Activated CD8-positive, alpha-beta T cell treated with anti-CD3 and anti-CD28 coated beads for 36 hours (primary cell): ENCODE measurements at regions of chr6 and their contacts with region 1.

Region 1: DNA sequence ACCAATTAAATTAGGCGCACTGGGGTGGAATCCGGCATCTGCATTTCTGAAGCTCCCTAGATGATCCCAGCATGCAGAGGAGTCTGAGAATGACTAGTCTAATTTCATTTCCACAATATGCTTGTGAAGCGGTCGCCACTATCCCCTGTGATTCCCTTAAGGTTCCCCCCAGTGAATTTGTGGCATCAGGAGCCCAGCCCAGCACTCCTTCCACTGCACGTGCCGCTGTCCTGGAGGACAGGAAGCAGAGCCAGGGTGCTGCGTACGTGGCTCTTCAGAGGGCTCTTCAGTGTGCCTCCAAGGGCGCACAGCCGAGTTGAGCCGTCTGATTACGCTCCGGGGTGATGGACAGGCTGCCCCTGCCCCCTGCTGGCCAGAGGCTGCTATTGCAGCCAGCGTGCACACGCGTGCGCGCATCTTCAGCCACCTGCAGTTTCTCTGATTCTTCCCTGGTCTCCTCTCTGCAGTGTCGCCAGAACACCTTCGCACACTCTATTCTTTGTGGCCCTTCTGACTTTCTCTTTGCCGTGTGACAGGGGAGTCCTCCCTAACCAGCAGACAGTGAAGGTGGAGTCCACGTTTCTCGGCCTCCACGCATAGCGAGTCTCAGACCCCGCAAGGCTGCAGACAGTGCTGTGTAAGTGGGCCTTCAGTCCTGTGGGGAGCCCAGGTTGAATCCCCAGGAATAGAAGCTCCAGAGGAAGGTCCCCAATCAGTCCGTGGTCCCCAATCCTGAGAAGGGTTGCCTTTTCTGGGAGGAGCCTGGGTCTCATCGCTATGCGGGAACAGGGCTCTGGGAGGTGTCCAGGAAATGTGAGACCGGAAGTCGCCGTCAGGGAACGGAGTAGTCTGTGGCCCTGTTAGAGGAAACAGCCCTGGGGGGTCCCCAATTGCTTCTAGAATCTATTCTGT is 16.5 kb upstream of the NCR2 start:
- DNase-seq: peak; percentile 90
- ATAC-seq: peak; percentile 99
- H3K4me3 Mint-ChIP-seq: peak overlapping the region; percentile 52
- H3K27ac Mint-ChIP-seq: peak overlapping the region; percentile 80
- H3K4me1 Mint-ChIP-seq: peaks cover 10% of the 10 kb centered on the region
- H3K27me3 Mint-ChIP-seq: peaks cover 14% of the 10 kb centered on the region
- CTCF ChIP-seq: peak; percentile 99

Region 2: DNA sequence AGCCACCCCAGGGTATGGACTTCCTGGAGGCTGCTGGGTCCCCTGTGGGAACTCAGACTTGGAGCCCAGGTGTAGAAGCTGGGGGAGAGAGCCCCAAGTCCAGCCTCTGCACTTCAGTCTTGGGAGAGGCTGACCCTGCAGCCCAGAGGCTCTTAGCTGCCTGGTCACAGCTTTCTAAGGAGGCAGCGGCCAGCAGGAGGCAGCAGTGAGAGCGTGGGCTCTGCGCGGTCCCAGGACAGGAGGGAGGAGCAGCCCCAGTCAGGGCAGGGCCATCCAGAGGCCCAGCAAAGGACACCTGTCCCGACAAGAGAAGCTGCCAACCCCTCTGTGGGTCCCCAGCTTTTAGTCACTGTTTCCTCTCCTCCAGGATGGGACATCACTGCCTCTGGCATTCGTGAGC is 127.3 kb before region 1 on chr6:
- CTCF ChIA-PET with region 1: interaction called, 11 read pairs
- POLR2A ChIA-PET with region 1: no interaction called
- intact Hi-C with region 1: no loop called
- DNase-seq: peak; percentile 62
- ATAC-seq: peak; percentile 76
- H3K4me3 Mint-ChIP-seq: no peak overlapping the region
- H3K27ac Mint-ChIP-seq: no peak overlapping the region
- H3K4me1 Mint-ChIP-seq: peaks cover 18% of the 10 kb centered on the region
- H3K27me3 Mint-ChIP-seq: no peaks in the 10 kb centered on the region
- CTCF ChIP-seq: peak; percentile 66

Region 3: DNA sequence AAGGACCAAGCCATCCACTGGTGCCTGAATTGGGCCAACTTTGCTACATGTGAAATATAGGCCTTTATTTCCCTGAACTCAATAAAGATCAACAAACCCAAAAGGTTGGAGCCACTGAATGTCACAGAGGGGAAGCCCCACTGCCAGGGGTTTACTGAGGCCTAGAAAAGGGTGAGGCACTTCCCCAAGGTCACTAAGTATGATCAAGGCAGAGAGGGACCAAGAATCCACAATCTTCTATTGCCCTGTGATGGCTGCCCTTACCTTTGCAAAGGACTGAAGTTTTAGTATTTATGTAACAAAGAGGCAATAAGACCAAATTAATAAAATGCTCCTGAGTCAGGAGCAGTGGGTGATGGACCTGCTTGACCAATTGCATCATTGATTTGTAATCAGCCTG is 50.4 kb before region 1 on chr6:
- CTCF ChIA-PET with region 1: no interaction called
- POLR2A ChIA-PET with region 1: no interaction called
- intact Hi-C with region 1: no loop called
- DNase-seq: no peak
- ATAC-seq: no peak
- H3K4me3 Mint-ChIP-seq: no peak overlapping the region
- H3K27ac Mint-ChIP-seq: no peak overlapping the region
- H3K4me1 Mint-ChIP-seq: peaks cover 4% of the 10 kb centered on the region
- H3K27me3 Mint-ChIP-seq: no peaks in the 10 kb centered on the region
- CTCF ChIP-seq: no peak

Region 4: GRCh38 chr6:41278699-41279405 is 40.1 kb before region 1 on chr6:
- CTCF ChIA-PET with region 1: interaction called, 30 read pairs
- POLR2A ChIA-PET with region 1: no interaction called
- intact Hi-C with region 1: no loop called
- DNase-seq: peak; percentile 85
- ATAC-seq: peak; percentile 92
- H3K4me3 Mint-ChIP-seq: no peak overlapping the region
- H3K27ac Mint-ChIP-seq: peak overlapping the region; percentile 55
- H3K4me1 Mint-ChIP-seq: peaks cover 12% of the 10 kb centered on the region
- H3K27me3 Mint-ChIP-seq: no peaks in the 10 kb centered on the region
- CTCF ChIP-seq: peak; percentile 72